A549 (cell line): ENCODE measurements at regions of chr14 and their contacts with region 1.

Region 1: GRCh38 chr14:100645192-100645990 is 58.2 kb upstream of the BEGAIN start:
- DNase-seq: peak; percentile 82 to 93
- ATAC-seq: peak; percentile 80 to 91
- H3K4me3 ChIP-seq: no peak overlapping the region
- H3K27ac ChIP-seq: peak overlapping the region; percentile 65 to 82
- H3K4me1 ChIP-seq: peaks cover 24% of the 10 kb centered on the region
- CTCF ChIP-seq: peak; percentile 76
- EP300 ChIP-seq: no peak
- POLR2A ChIP-seq: no peak
- RAD21 ChIP-seq: peak; percentile 86 to 95

Region 2: GRCh38 chr14:100400115-100400514 is 245.3 kb before region 1 on chr14:
- CTCF ChIA-PET with region 1: interaction called, 16 read pairs
- POLR2A ChIA-PET with region 1: no interaction called
- DNase-seq: no peak
- ATAC-seq: no peak
- H3K4me3 ChIP-seq: no peak overlapping the region
- H3K27ac ChIP-seq: peak overlapping the region in 1 of 2 experiments; percentile 42; a peak in 3 of 6 replicates
- H3K4me1 ChIP-seq: peaks cover 38% of the 10 kb centered on the region
- CTCF ChIP-seq: no peak
- EP300 ChIP-seq: no peak
- POLR2A ChIP-seq: no peak
- RAD21 ChIP-seq: no peak

Region 3: DNA sequence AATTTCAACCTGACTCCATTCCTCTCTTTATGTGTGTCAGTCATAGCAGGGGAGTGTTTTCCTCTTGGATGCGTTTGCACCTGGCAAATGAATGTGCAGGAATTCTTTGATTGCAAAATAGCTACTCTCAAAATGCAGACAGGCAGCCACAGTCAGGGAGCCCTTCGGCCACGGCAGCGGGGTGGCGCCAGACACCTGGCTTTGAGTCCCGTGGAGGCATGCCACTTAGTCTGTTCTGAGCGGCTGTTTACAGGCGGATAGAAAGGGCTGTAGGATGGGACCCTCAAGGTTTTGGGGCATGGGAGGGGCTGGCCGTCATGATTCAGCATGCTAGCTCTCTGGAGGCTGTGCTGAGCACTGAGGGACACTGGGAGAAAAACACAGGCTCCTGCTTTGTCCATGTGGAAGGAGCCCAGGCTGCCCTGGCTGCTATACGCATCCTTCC is 205.2 kb before region 1 on chr14:
- CTCF ChIA-PET with region 1: interaction called, 155 read pairs
- POLR2A ChIA-PET with region 1: interaction called, 4 read pairs
- DNase-seq: peak; percentile 81 to 89
- ATAC-seq: peak; percentile 83 to 93
- H3K4me3 ChIP-seq: no peak overlapping the region
- H3K27ac ChIP-seq: peak overlapping the region; percentile 70 to 83
- H3K4me1 ChIP-seq: peaks cover 61% of the 10 kb centered on the region
- CTCF ChIP-seq: peak; percentile 90
- EP300 ChIP-seq: no peak
- POLR2A ChIP-seq: no peak
- RAD21 ChIP-seq: peak; percentile 97 to 98

Region 4: DNA sequence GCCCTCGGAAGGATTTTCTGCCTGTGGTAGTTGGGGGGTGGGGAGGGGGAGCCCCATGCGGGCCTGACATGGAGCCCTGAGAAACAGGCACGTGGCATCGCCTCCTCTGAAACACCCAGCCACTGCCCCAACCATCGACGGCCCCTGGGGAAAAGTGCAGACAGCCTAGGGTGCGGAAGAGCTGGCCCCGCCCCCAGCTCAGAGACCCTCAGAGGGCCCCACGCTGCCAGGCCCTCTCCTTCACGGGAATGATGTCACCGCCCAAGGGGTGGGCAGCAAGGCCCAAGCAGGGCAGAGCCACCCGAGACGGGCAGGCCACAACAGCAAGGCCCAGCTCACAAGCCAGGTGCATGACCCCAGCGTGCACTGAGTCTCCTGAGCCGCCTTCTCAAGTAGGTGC is 84.4 kb before region 1 on chr14:
- CTCF ChIA-PET with region 1: interaction called, 10 read pairs
- POLR2A ChIA-PET with region 1: no interaction called
- DNase-seq: no peak
- ATAC-seq: no peak
- H3K4me3 ChIP-seq: no peak overlapping the region
- H3K27ac ChIP-seq: no peak overlapping the region
- H3K4me1 ChIP-seq: no peaks in the 10 kb centered on the region
- CTCF ChIP-seq: no peak
- EP300 ChIP-seq: no peak
- POLR2A ChIP-seq: no peak
- RAD21 ChIP-seq: no peak

Region 5: GRCh38 chr14:100634026-100634425 is 11.4 kb before region 1 on chr14:
- CTCF ChIA-PET with region 1: interaction called, 29 read pairs
- POLR2A ChIA-PET with region 1: no interaction called
- DNase-seq: no peak
- ATAC-seq: no peak
- H3K4me3 ChIP-seq: no peak overlapping the region
- H3K27ac ChIP-seq: no peak overlapping the region
- H3K4me1 ChIP-seq: no peaks in the 10 kb centered on the region
- CTCF ChIP-seq: no peak
- EP300 ChIP-seq: no peak
- POLR2A ChIP-seq: no peak
- RAD21 ChIP-seq: no peak

Region 6: DNA sequence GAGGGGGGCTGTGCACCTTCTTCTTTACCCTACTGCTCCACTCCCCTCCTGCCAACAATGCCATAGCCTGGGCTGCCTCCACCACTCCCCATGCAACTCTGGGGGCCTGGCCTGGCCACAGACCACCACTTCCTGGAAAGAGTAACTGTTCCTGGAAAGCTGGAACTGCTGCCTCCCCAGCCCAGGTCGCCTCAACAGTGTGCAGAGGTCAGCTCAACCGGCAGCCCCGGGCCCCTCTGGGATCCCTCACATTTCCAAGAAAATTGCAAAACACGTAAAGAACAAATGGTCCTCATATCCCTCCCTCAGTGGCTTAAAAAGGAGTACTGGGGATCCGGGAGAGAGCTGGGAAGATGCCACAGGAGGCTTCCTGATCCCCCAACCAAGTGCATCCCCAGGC is 893.5 kb after region 1 on chr14:
- CTCF ChIA-PET with region 1: no interaction called
- POLR2A ChIA-PET with region 1: no interaction called
- DNase-seq: no peak
- ATAC-seq: no peak
- H3K4me3 ChIP-seq: no peak overlapping the region
- H3K27ac ChIP-seq: peak overlapping the region in 1 of 2 experiments; percentile 46; a peak in 2 of 6 replicates
- H3K4me1 ChIP-seq: peaks cover 12% of the 10 kb centered on the region
- CTCF ChIP-seq: no peak
- EP300 ChIP-seq: no peak
- POLR2A ChIP-seq: no peak
- RAD21 ChIP-seq: no peak